HEK293 (cell line): ENCODE measurements at regions of chr11 and their contacts with region 1.

Region 1: DNA sequence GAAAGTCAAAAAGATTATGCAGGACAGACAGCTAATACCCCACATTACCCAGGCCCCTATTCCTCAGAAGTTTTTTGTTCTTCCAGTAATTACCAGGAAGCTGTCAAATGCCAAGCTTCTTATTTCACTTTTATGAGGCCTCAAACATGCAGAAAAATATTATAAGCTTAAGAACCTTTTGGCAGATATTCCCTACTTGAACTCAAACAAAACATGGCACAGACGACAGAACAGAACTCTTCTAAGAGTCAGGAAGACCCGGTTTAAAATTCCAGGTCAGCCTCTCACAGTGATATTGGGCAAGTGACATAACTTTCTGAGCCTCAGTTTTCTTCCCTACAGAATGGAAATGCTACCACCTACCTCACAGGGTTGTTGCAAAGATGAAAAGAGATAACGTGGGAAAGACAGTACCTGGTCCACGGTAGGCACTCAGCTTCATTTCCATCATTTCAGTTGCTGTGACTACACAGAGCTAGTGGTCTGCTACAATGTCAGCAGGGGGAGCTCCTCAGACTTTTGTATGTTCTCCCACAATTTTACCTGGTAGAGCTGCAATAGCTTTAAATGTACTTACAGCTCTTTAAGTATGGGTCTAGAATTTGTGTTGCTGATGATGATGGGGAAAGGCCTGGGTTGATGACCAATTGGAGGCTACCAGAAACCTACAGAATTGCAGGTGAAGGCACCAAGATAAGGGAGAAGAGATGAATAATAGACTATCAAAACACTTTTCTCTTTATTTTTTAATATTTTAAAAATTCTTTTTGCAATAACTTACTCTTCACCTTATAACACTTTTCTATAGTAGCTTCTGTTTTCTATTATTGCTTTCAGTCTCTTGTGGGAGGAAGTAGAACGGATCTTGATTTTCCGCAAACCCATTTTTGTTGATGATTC is 98.3 kb upstream of the CHRM4 start:
- H3K4me3 ChIP-seq: no peak overlapping the region
- H3K27ac ChIP-seq: no peak overlapping the region
- H3K4me1 ChIP-seq: no peaks in the 10 kb centered on the region
- CTCF ChIP-seq: no peak

Region 2: GRCh38 chr11:46367244-46367915 is 122.5 kb before region 1 on chr11:
- CTCF ChIA-PET with region 1: no interaction called
- POLR2A ChIA-PET with region 1: no interaction called
- H3K4me3 ChIP-seq: no peak overlapping the region
- H3K27ac ChIP-seq: no peak overlapping the region
- H3K4me1 ChIP-seq: no peaks in the 10 kb centered on the region
- CTCF ChIP-seq: peak; percentile 67

Region 3: GRCh38 chr11:46413757-46414465 is 76.0 kb before region 1 on chr11:
- CTCF ChIA-PET with region 1: no interaction called
- POLR2A ChIA-PET with region 1: no interaction called
- H3K4me3 ChIP-seq: no peak overlapping the region
- H3K27ac ChIP-seq: no peak overlapping the region
- H3K4me1 ChIP-seq: peaks cover 3% of the 10 kb centered on the region; the same call in 1 of the 2 replicates
- CTCF ChIP-seq: no peak

Region 4: GRCh38 chr11:46475926-46476545 is 13.9 kb before region 1 on chr11:
- CTCF ChIA-PET with region 1: interaction called, 18 read pairs
- POLR2A ChIA-PET with region 1: no interaction called
- H3K4me3 ChIP-seq: no peak overlapping the region
- H3K27ac ChIP-seq: no peak overlapping the region
- H3K4me1 ChIP-seq: no peaks in the 10 kb centered on the region
- CTCF ChIP-seq: no peak

Region 5: GRCh38 chr11:46521961-46522681 is 32.2 kb after region 1 on chr11:
- CTCF ChIA-PET with region 1: interaction called, 17 read pairs
- POLR2A ChIA-PET with region 1: no interaction called
- H3K4me3 ChIP-seq: no peak overlapping the region
- H3K27ac ChIP-seq: no peak overlapping the region
- H3K4me1 ChIP-seq: peaks cover 4% of the 10 kb centered on the region
- CTCF ChIP-seq: no peak

Region 6: GRCh38 chr11:46537537-46538295 is 47.8 kb after region 1 on chr11:
- CTCF ChIA-PET with region 1: interaction called, 30 read pairs
- POLR2A ChIA-PET with region 1: no interaction called
- H3K4me3 ChIP-seq: no peak overlapping the region
- H3K27ac ChIP-seq: no peak overlapping the region
- H3K4me1 ChIP-seq: no peaks in the 10 kb centered on the region
- CTCF ChIP-seq: peak; percentile 65

Region 7: GRCh38 chr11:46778416-46778815 is 288.5 kb after region 1 on chr11:
- CTCF ChIA-PET with region 1: no interaction called
- POLR2A ChIA-PET with region 1: no interaction called
- H3K4me3 ChIP-seq: no peak overlapping the region
- H3K27ac ChIP-seq: no peak overlapping the region
- H3K4me1 ChIP-seq: no peaks in the 10 kb centered on the region
- CTCF ChIP-seq: no peak